Esophagus muscularis mucosa (tissue), 4 donors: ENCODE measurements at regions of chr1 and their contacts with region 1.

Region 1: DNA sequence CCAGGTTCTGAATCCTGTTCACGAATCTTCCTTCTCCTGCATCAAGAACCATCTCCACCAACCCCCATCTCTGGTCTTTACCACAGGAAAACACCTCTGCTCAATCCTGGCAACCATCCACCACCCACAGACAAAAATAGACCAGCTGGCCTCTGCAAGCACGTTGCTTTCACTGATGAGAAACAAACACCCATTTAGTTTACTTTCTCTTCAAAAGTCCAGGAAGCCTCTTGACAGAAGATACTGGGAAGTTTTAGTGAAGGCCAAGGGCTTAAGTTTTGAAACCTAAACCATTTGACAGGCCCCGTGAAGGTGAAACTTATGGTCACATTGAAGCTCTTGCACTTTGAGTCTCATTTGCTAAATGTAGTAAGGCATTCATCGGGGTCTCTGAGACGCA is 122.6 kb upstream of the PPP2R5A start:
- DNase-seq: no peak
- H3K4me3 ChIP-seq: no peak overlapping the region
- H3K27ac ChIP-seq: peak overlapping the region; percentile 26 to 70 (median 36)
- H3K4me1 ChIP-seq: peaks cover 35 to 43% (median 36%) of the 10 kb centered on the region in 4 donors
- H3K27me3 ChIP-seq: no peaks in the 10 kb centered on the region
- CTCF ChIP-seq: no peak
- EP300 ChIP-seq: no peak
- POLR2A ChIP-seq: no peak

Region 2: DNA sequence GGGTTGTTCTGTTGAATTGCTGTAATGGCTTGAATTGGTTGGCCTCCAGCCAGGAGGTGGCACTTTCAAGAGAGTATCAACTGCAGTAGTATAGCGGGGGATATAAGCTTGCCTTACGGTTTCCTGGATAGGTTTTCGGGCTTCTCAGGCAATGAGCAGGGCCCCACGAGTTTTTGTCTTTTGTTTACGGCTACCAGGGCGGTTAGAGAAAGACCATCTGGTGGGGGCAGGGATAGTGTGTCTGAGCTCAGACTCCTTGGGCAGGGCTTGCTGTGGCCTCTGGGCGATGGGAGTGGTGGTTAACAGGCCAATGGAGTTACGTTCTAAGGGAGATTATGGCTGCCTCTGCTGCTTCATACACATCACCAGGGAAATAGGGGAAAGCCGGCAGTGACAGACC is 64.3 kb before region 1 on chr1:
- intact Hi-C with region 1: no loop called
- DNase-seq: no peak
- H3K4me3 ChIP-seq: no peak overlapping the region
- H3K27ac ChIP-seq: no peak overlapping the region
- H3K4me1 ChIP-seq: no peaks in the 10 kb centered on the region
- H3K27me3 ChIP-seq: no peaks in the 10 kb centered on the region
- CTCF ChIP-seq: no peak
- EP300 ChIP-seq: no peak
- POLR2A ChIP-seq: no peak

Region 3: GRCh38 chr1:212218911-212219310 is 56.3 kb after region 1 on chr1:
- intact Hi-C with region 1: no loop called
- DNase-seq: no peak
- H3K4me3 ChIP-seq: no peak overlapping the region
- H3K27ac ChIP-seq: peak overlapping the region in 1 of 4 donors; percentile 21
- H3K4me1 ChIP-seq: peaks cover 0 to 5% (median 0%) of the 10 kb centered on the region in 4 donors
- H3K27me3 ChIP-seq: no peaks in the 10 kb centered on the region
- CTCF ChIP-seq: no peak
- EP300 ChIP-seq: no peak
- POLR2A ChIP-seq: no peak

Region 4: GRCh38 chr1:212234431-212235395 is 72.1 kb after region 1 on chr1:
- intact Hi-C with region 1: loop called (anchors 10 kb)
- DNase-seq: no peak
- H3K4me3 ChIP-seq: no peak overlapping the region
- H3K27ac ChIP-seq: peak overlapping the region; percentile 62 to 75 (median 68)
- H3K4me1 ChIP-seq: peaks cover 30 to 36% (median 31%) of the 10 kb centered on the region in 4 donors
- H3K27me3 ChIP-seq: no peaks in the 10 kb centered on the region
- CTCF ChIP-seq: no peak
- EP300 ChIP-seq: no peak
- POLR2A ChIP-seq: no peak